Endothelial cell of umbilical vein (primary cell): ENCODE measurements at regions of chr16 and their contacts with region 1.

Region 1: GRCh38 chr16:77675464-77676324 is 46.6 kb upstream of the NUDT7 start:
- DNase-seq: peak; percentile 75
- H3K4me3 ChIP-seq: no peak overlapping the region
- H3K27ac ChIP-seq: no peak overlapping the region
- H3K4me1 ChIP-seq: no peaks in the 10 kb centered on the region
- H3K27me3 ChIP-seq: peaks cover 0 to 6% of the 10 kb centered on the region in 2 experiments
- CTCF ChIP-seq: peak; percentile 74 to 96
- POLR2A ChIP-seq: no peak

Region 2: GRCh38 chr16:77660311-77660710 is 15.4 kb before region 1 on chr16:
- CTCF ChIA-PET with region 1: interaction called, 12 read pairs
- POLR2A ChIA-PET with region 1: no interaction called
- dilution Hi-C with region 1: no loop called
- intact Hi-C with region 1: no loop called
- DNase-seq: peak; percentile 81
- H3K4me3 ChIP-seq: no peak overlapping the region
- H3K27ac ChIP-seq: peak overlapping the region; percentile 40
- H3K4me1 ChIP-seq: peaks cover 10% of the 10 kb centered on the region
- H3K27me3 ChIP-seq: no peaks in the 10 kb centered on the region
- CTCF ChIP-seq: peak; percentile 65 to 68
- POLR2A ChIP-seq: no peak

Region 3: DNA sequence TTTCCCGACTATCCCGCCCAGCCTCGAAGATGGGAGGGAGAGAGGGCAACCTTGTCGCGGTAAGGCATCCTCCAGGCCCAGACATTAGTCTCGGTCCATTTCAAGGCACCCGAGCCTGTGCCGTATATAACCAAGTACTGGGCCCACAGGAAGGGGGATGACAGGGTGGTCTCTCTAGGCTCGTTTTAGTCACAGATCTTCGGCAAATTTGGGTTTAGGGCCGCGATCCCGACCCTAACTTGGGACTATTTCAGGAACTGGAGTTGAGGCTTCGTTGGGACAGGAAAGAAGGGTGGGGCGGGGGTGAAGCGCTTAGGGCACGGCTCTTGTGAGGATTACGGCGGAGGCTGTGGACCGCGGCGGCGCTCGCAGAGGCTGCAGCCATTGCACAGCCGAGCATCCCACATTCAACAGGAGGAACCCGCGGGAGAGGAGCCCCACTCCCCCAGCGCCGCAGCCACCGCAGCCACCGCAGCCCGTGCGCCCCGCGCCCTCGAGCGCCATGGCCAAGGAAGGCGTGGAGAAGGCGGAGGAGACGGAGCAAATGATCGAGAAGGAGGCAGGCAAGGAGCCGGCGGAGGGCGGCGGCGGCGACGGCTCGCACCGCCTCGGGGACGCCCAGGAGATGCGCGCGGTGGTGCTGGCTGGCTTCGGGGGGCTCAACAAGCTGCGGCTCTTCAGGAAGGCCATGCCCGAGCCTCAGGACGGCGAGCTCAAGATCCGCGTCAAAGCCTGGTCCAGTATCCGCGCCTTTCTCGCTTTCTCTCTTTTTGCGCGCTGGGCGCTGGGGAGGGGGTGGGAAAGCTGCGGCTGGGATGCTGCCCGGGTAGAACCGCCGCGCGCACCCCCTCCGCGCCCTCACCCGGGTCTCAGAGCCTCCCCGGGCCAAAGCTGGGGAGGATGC is 112.7 kb after region 1 on chr16 and contains the start of gene VAT1L:
- CTCF ChIA-PET with region 1: interaction called, 3 read pairs
- POLR2A ChIA-PET with region 1: no interaction called
- dilution Hi-C with region 1: no loop called
- intact Hi-C with region 1: loop called (anchors 2 kb)
- DNase-seq: peak; percentile 54
- H3K4me3 ChIP-seq: peak within 1 kb of the TSS; percentile 41 to 61 (median 50)
- H3K27ac ChIP-seq: no peak within 1 kb of the TSS
- H3K4me1 ChIP-seq: peaks cover 4% of the 10 kb centered on the region
- H3K27me3 ChIP-seq: peaks cover 28 to 41% of the 10 kb centered on the region in 2 experiments
- CTCF ChIP-seq: no peak
- POLR2A ChIP-seq: no peak
- total RNA-seq, gene VAT1L: 1.5 and 2.1 TPM in 2 replicates

Region 4: GRCh38 chr16:77850636-77851333 is 175.1 kb after region 1 on chr16:
- CTCF ChIA-PET with region 1: no interaction called
- POLR2A ChIA-PET with region 1: no interaction called
- dilution Hi-C with region 1: no loop called
- intact Hi-C with region 1: loop called (anchors 1 kb)
- DNase-seq: peak; percentile 32
- H3K4me3 ChIP-seq: no peak overlapping the region
- H3K27ac ChIP-seq: no peak overlapping the region
- H3K4me1 ChIP-seq: no peaks in the 10 kb centered on the region
- H3K27me3 ChIP-seq: peaks cover 2 to 7% of the 10 kb centered on the region in 2 experiments
- CTCF ChIP-seq: no peak
- POLR2A ChIP-seq: no peak

Region 5: DNA sequence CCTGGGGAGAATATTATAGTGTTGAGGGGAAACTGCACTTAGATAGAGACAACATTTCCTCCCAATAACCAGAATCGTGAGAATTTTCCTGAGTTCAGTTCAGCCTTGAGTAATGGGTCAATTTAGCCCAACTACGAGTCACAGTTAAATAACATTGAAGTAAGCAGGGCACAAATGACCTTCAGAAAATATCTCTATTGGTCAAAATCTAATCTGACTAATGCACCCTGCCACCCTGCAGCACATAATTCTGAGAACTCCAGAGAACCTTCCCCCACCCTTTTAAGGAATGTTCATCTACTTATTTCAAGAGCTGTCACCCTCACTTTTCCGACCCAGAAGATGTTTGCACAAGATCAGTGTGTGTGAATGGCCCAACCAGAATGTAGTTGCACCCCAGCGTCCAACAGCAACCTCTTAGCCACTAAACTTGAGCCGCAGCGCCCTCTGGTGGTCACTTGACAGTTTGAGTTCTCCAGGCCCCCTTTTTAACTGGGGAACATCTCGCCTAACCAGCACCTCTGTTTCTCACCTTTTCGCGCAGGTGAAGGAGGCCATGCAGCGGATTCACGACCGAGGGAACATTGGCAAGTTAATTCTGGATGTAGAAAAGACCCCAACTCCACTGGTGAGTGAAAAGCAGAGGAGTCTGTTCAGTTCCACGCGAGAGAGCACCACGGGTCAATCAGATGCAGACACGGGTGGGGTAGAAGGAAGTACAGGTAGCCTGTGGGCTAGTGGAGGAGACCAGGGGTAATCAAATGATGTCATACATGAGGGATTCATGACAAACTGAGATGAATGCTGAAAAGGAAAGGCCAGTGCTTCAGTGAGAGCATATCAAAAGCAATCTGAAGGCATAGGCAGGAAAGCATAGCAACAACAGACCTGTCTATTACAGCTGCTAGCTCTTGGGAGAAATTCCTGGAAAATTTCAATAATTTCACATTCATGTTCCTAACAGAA is 295.9 kb after region 1 on chr16:
- CTCF ChIA-PET with region 1: interaction called, 40 read pairs
- POLR2A ChIA-PET with region 1: interaction called, 3 read pairs
- dilution Hi-C with region 1: no loop called
- intact Hi-C with region 1: loop called (anchors 1 kb)
- DNase-seq: peak; percentile 52
- H3K4me3 ChIP-seq: no peak overlapping the region
- H3K27ac ChIP-seq: no peak overlapping the region
- H3K4me1 ChIP-seq: no peaks in the 10 kb centered on the region
- H3K27me3 ChIP-seq: no peaks in the 10 kb centered on the region
- CTCF ChIP-seq: peak; percentile 73 to 81
- POLR2A ChIP-seq: no peak

Region 6: DNA sequence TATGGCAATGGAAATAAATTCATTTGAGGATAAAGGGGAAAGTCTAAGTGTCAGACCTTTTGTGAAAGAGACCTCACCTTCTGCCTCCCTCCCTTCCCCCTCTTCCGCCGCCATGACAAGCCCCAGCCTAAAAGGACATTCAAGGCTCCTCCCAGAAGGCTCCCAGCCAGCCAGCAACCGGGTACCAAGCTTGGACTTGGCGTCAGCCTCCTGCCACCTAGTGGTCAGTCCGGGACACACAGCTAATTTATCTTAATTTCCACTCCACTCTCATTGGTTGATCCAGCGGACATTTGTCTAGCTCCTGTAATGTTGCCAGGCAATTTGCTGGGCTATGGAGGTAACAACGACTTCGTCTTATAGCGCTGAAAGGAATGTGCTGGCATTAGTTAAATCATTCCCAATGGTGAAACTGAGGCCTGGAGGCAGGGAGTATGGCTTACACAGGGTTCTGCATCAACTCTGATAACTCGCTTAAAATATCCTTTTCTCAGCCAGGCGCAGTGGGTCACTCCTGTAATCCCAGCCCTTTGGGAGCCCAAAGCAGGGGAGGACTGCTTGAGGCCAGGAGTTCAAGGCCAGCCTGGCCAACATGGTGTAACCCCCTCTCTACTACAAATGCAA is 327.3 kb after region 1 on chr16:
- CTCF ChIA-PET with region 1: interaction called, 34 read pairs
- POLR2A ChIA-PET with region 1: no interaction called
- dilution Hi-C with region 1: no loop called
- intact Hi-C with region 1: loop called (anchors 1 kb)
- DNase-seq: peak; percentile 88
- H3K4me3 ChIP-seq: no peak overlapping the region
- H3K27ac ChIP-seq: no peak overlapping the region
- H3K4me1 ChIP-seq: no peaks in the 10 kb centered on the region
- H3K27me3 ChIP-seq: no peaks in the 10 kb centered on the region
- CTCF ChIP-seq: peak; percentile 87 to 88
- POLR2A ChIP-seq: no peak

Region 7: GRCh38 chr16:78099372-78100161 is 423.9 kb after region 1 on chr16 and contains the start of gene WWOX:
- CTCF ChIA-PET with region 1: interaction called, 7 read pairs
- POLR2A ChIA-PET with region 1: no interaction called
- dilution Hi-C with region 1: no loop called
- intact Hi-C with region 1: loop called (anchors 1 kb)
- DNase-seq: peak; percentile 99
- H3K4me3 ChIP-seq: peak within 1 kb of the TSS; percentile 47 to 79 (median 54)
- H3K27ac ChIP-seq: peak within 1 kb of the TSS; percentile 55
- H3K4me1 ChIP-seq: peaks cover 9% of the 10 kb centered on the region
- H3K27me3 ChIP-seq: no peaks in the 10 kb centered on the region
- CTCF ChIP-seq: peak; percentile 87 to 96
- POLR2A ChIP-seq: no peak
- total RNA-seq, gene WWOX: 12.0 and 12.5 TPM in 2 replicates